ENCODE measurements at regions of chr3 and their contacts with region 1.

Region 1: GRCh38 chr3:126982471-126983175 is at the start of gene PLXNA1:
- DNase-seq: peak; percentile 61 to 83 (median 73)
- H3K4me3 ChIP-seq: peak within 1 kb of the TSS; percentile 81
- H3K27ac ChIP-seq: peak within 1 kb of the TSS; percentile 0 to 5
- H3K4me1 ChIP-seq: peaks cover 15% of the 10 kb centered on the region
- H3K27me3 ChIP-seq: no peaks in the 10 kb centered on the region
- CTCF ChIP-seq: peak; percentile 45 to 88 (median 70)
- EP300 ChIP-seq: no peak
- POLR2A ChIP-seq: no peak
- total RNA-seq, gene PLXNA1: 13.8 to 47.2 (median 27.6) TPM

Region 2: GRCh38 chr3:126746395-126747177 is 236.0 kb before region 1 on chr3:
- intact Hi-C with region 1: loop called in 2 of 4 experiments (anchors 5 to 10 kb)
- DNase-seq: peak in 3 of 5 donors; percentile 26 to 54 (median 42)
- H3K4me3 ChIP-seq: no peak overlapping the region
- H3K27ac ChIP-seq: peak overlapping the region in 1 of 2 donors; percentile 45
- H3K4me1 ChIP-seq: peaks cover 1% of the 10 kb centered on the region
- H3K27me3 ChIP-seq: no peaks in the 10 kb centered on the region
- CTCF ChIP-seq: peak in 1 of 3 donors; percentile 7
- EP300 ChIP-seq: no peak
- POLR2A ChIP-seq: no peak

Region 3: DNA sequence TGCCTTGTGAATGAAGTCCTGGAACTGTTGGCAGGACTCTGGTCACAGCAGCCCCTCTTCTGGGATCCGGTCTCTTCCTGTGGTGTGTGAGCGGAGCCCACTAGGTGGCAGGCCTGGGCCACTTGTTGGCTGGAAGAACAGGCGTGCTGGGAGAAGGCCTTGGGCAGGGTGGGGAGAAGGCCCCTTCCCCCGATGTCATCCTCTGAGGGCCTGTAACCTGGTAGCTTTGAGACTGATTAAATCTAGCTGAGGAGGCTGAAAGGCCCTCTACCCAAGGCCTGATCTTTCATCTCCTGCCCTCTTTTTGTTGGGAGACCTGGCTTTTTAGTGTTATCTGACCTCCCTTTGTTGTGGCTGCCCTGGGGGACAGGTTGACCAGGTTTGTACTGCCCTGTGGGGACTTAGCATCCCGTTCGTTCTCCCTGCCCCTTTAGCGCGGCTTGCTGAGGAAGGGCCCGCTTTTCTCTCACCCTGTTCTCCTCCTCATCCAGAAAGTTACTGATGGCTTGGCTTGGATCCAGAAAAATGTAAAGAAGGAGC is 230.2 kb before region 1 on chr3:
- intact Hi-C with region 1: loop called (anchors 2 to 10 kb)
- DNase-seq: peak; percentile 73 to 87 (median 81)
- H3K4me3 ChIP-seq: no peak overlapping the region
- H3K27ac ChIP-seq: no peak overlapping the region
- H3K4me1 ChIP-seq: no peaks in the 10 kb centered on the region
- H3K27me3 ChIP-seq: no peaks in the 10 kb centered on the region
- CTCF ChIP-seq: peak; percentile 54 to 78 (median 78)
- EP300 ChIP-seq: no peak
- POLR2A ChIP-seq: no peak

Region 4: DNA sequence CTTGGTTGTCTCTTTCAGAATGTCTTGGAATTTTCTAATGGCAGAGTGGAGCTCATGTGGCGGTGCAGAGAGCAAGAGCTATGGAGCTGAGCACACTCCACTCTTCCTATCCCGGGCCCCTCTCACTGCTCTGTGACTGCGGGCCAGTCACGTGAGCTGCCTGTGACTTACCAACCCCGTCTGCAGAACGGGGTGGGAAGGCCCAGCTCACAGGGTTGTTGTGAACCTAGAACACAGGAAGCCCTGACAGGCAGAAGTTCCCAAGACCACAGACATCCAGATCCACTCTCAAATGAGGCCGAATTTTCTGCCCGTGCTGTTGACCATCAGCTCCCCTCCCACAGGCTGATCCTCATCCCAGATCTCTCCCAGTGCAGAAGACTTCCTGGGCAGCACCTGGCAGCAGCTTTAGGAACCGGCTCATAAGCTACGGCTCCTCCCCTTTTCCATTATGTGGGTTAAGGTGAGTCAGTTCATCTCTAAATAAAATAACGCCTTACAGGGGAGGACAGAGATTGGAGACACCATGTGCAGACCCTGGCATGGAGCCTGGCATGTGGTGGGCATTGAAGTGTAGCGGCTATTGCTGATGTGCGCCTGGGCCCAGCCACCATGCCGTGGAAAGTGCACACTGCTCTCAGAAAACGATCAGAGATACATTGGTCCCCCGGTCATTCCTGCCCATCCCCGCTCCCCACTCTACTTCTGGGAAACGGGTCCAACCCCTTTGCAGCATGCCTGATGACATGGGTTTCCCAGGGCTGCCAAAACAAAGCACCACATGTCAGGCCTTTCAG is 35.0 kb before region 1 on chr3:
- intact Hi-C with region 1: no loop called
- DNase-seq: no peak
- H3K4me3 ChIP-seq: no peak overlapping the region
- H3K27ac ChIP-seq: no peak overlapping the region
- H3K4me1 ChIP-seq: no peaks in the 10 kb centered on the region
- H3K27me3 ChIP-seq: no peaks in the 10 kb centered on the region
- CTCF ChIP-seq: no peak
- EP300 ChIP-seq: no peak
- POLR2A ChIP-seq: no peak

Measured in ovary (tissue), 10 donors.